Posterior vena cava (tissue), 2 donors: ENCODE measurements at regions of chr16 and their contacts with region 1.

Region 1: DNA sequence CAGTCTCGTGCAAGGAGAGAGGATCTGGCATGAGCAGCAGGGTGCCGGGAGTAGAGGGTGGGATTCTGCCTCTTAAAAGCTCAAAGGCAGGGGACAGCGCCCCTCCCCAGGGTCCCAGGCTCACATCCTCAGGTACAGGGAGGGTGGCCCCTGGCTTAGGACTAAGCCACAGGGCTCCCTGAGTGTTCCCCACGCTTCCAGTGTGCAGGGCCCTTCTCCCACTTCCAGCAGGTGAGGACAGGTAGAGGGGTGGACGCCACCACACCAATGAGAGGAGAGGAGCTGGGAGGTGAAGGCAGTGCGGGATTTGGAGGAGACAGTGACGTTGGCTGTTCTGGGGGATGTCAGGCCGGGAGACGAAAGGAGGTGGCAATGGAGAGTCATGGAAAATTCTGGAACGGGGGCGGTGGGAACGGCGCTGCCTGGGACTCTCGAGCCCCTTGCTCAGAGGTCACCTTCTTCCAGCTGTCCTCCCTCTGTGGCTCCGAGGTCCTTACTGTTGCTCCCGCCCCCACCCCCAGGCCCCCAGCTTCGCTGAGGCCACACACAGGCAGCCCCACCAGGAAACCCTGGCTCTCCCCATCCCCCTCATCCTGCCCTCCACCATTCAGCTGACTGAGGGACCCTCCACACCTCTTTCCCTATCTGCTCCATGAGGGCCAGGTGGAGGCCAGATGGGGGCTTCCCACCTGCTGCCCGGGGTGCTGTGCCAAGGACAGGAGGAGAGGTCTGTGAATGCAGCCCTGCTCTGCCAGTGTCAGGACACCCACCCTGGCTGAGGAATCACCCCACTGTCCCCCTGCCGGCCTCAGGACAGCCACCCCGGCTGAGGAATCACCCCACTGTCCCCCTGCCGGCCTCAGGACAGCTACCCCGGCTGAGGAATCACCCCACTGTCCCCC is 57.7 kb upstream of the ACSF3 start:
- DNase-seq: peak; percentile 64

Region 2: GRCh38 chr16:88831838-88832237 is 204.1 kb before region 1 on chr16:
- intact Hi-C with region 1: no loop called
- DNase-seq: no peak

Region 3: GRCh38 chr16:89061590-89062380 is 25.9 kb after region 1 on chr16:
- intact Hi-C with region 1: loop called in 1 of 2 experiments (anchors 1 kb)
- DNase-seq: no peak